Colonic mucosa (tissue), 4 donors: ENCODE measurements at regions of chr3 and their contacts with region 1.

Region 1: GRCh38 chr3:188947401-188948280 is 224.1 kb upstream of the TPRG1 start:
- DNase-seq: peak; percentile 89
- H3K4me3 ChIP-seq: peak overlapping the region; percentile 28
- H3K27ac ChIP-seq: peak overlapping the region; percentile 59
- H3K4me1 ChIP-seq: no peaks in the 10 kb centered on the region
- H3K27me3 ChIP-seq: no peaks in the 10 kb centered on the region
- CTCF ChIP-seq: peak; percentile 17

Region 2: GRCh38 chr3:188154014-188154808 is 793.4 kb before region 1 on chr3 and contains the start of gene LPP:
- intact Hi-C with region 1: loop called (anchors 10 kb)
- DNase-seq: peak; percentile 80
- H3K4me3 ChIP-seq: peak within 1 kb of the TSS; percentile 75
- H3K27ac ChIP-seq: peak within 1 kb of the TSS; percentile 94
- H3K4me1 ChIP-seq: peaks cover 10% of the 10 kb centered on the region
- H3K27me3 ChIP-seq: no peaks in the 10 kb centered on the region
- CTCF ChIP-seq: no peak
- total RNA-seq, gene LPP: 170 to 246 TPM

Region 3: DNA sequence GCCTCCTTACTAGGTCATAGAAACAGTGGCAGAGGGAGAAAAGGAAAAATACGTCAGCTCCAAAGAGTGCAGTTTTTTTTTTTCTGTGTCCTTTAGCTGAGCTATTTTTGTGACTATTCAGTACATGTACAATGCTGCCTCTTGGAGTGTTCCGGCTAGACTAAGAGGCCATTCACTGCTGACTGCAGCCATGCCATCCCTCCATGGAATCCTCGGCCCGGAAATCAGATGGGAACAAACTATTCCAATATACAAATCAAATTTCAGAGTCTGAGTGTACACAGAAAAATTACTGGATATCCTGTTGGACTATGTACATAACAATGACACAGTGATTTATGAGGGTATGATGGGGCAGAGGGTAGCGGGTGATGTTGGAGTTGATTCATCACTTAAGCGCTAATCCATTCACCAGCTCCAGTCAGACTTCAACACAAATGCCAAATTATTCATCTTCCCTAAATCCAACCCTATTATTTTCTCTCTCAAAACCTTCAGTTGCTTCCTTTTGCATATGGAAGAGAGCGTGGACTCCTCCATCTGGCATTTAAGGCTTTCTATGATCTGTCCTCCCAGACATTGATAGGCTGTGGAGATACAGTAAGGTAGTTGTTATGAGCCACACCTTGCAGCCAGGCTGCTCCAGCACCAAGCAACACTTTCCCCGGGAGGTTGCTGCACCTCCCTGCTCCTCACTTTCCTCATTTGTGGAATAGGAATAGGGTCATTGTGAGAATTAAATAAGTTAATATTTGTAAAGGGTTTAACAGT is 684.5 kb before region 1 on chr3:
- intact Hi-C with region 1: loop called (anchors 10 kb)
- DNase-seq: no peak
- H3K4me3 ChIP-seq: no peak overlapping the region
- H3K27ac ChIP-seq: peak overlapping the region; percentile 30
- H3K4me1 ChIP-seq: peaks cover 20% of the 10 kb centered on the region
- H3K27me3 ChIP-seq: no peaks in the 10 kb centered on the region
- CTCF ChIP-seq: no peak

Region 4: GRCh38 chr3:188830893-188831292 is 116.7 kb before region 1 on chr3:
- intact Hi-C with region 1: no loop called
- DNase-seq: no peak
- H3K4me3 ChIP-seq: no peak overlapping the region
- H3K27ac ChIP-seq: no peak overlapping the region
- H3K4me1 ChIP-seq: no peaks in the 10 kb centered on the region
- H3K27me3 ChIP-seq: no peaks in the 10 kb centered on the region
- CTCF ChIP-seq: no peak

Region 5: DNA sequence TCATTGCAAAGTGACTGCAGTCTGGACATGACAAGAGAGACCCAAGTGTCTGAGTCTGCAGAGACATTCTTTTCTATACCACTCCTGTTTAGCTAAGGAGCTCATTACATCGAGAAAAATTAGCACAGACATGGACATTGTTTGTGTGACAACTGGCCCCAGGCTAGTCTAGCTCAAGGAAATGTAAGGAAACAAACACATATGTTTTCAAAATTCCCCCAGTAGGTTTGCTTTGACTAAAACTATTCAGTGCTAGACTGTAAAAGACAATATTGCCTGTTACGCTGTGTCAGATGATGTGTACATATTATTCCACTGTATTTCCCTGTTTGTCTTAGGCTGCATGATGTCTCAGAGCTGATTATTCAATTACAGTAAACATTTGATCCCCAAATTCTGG is 265.1 kb after region 1 on chr3:
- intact Hi-C with region 1: no loop called
- DNase-seq: no peak
- H3K4me3 ChIP-seq: no peak overlapping the region
- H3K27ac ChIP-seq: no peak overlapping the region
- H3K4me1 ChIP-seq: no peaks in the 10 kb centered on the region
- H3K27me3 ChIP-seq: no peaks in the 10 kb centered on the region
- CTCF ChIP-seq: no peak